ENCODE measurements at regions of chr7 and their contacts with region 1.

Region 1: GRCh38 chr7:49321843-49322242 is 397.5 kb downstream of the CDC14C start:
- DNase-seq: no peak

Region 2: DNA sequence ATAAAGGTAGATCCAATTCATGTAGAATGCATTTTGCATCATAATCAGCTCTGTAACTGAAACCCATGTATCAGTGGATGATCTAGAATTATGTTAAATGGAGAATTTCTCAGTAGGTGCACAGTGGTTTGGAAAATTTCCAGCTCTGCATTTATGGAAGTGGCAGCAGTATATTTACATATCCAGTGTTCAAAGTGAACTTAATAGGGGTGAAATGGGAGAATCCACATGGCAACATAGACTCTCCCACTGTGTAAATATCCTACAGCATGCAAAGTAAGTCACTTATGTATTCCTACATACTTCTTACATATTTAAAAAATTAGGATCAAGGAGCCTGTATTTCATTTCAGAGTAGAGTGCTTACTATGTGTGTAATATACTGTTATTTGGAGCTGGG is 362.2 kb before region 1 on chr7:
- intact Hi-C with region 1: no loop called
- DNase-seq: no peak

Region 3: GRCh38 chr7:49279891-49280290 is 42.0 kb before region 1 on chr7:
- intact Hi-C with region 1: loop called in 1 of 2 experiments (anchors 2 kb)
- DNase-seq: no peak